ENCODE measurements at regions of chr15 and their contacts with region 1.

Region 1: GRCh38 chr15:84929744-84930371 is 45.4 kb downstream of the SLC28A1 start:
- DNase-seq: no peak
- ATAC-seq: peak; percentile 14
- H3K4me3 Mint-ChIP-seq: no peak overlapping the region
- H3K27ac Mint-ChIP-seq: no peak overlapping the region
- H3K4me1 Mint-ChIP-seq: peaks cover 6% of the 10 kb centered on the region
- H3K27me3 Mint-ChIP-seq: no peaks in the 10 kb centered on the region

Region 2: GRCh38 chr15:84844964-84845363 is 84.9 kb before region 1 on chr15:
- CTCF ChIA-PET with region 1: interaction called, 12 read pairs
- DNase-seq: no peak
- ATAC-seq: no peak
- H3K4me3 Mint-ChIP-seq: no peak overlapping the region
- H3K27ac Mint-ChIP-seq: no peak overlapping the region
- H3K4me1 Mint-ChIP-seq: no peaks in the 10 kb centered on the region
- H3K27me3 Mint-ChIP-seq: no peaks in the 10 kb centered on the region

Region 3: GRCh38 chr15:84879088-84879792 is 50.6 kb before region 1 on chr15:
- CTCF ChIA-PET with region 1: interaction called, 11 read pairs
- DNase-seq: no peak
- ATAC-seq: no peak
- H3K4me3 Mint-ChIP-seq: no peak overlapping the region
- H3K27ac Mint-ChIP-seq: no peak overlapping the region
- H3K4me1 Mint-ChIP-seq: peaks cover 3% of the 10 kb centered on the region
- H3K27me3 Mint-ChIP-seq: peaks cover 7% of the 10 kb centered on the region

Region 4: DNA sequence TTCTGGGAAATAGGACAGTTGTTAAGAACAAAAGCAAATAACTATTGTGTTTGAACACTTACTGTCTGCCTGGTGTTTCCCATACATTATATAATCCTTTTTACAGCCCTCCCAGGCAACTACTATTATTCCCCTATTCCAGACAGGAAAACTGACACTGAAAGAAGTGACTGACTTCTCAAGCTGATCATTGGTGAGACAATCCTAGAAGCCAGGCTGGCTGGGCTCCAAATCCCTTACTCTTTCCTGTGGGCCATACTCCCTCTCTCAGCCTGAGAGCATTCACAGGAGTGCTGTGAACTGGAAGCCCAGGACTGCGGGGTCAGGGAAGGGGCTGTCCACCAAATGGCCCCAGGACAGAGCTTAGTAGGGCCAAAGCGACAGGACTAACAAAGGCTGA is 12.6 kb after region 1 on chr15:
- CTCF ChIA-PET with region 1: interaction called, 10 read pairs
- DNase-seq: no peak
- ATAC-seq: no peak
- H3K4me3 Mint-ChIP-seq: no peak overlapping the region
- H3K27ac Mint-ChIP-seq: no peak overlapping the region
- H3K4me1 Mint-ChIP-seq: peaks cover 2% of the 10 kb centered on the region
- H3K27me3 Mint-ChIP-seq: peaks cover 19% of the 10 kb centered on the region

Region 5: GRCh38 chr15:84992157-84992944 is 62.5 kb after region 1 on chr15:
- CTCF ChIA-PET with region 1: no interaction called
- DNase-seq: peak; percentile 51
- ATAC-seq: peak; percentile 72
- H3K4me3 Mint-ChIP-seq: no peak overlapping the region
- H3K27ac Mint-ChIP-seq: no peak overlapping the region
- H3K4me1 Mint-ChIP-seq: peaks cover 31% of the 10 kb centered on the region
- H3K27me3 Mint-ChIP-seq: no peaks in the 10 kb centered on the region

Measured in activated CD8-positive, alpha-beta memory T cell treated with anti-CD3 and anti-CD28 coated beads, Interleukin-2, amount 10 ng/mL, durations not matched to agents 7 days and 5 days (primary cell).